ENCODE measurements at regions of chr11 and their contacts with region 1.

Region 1: DNA sequence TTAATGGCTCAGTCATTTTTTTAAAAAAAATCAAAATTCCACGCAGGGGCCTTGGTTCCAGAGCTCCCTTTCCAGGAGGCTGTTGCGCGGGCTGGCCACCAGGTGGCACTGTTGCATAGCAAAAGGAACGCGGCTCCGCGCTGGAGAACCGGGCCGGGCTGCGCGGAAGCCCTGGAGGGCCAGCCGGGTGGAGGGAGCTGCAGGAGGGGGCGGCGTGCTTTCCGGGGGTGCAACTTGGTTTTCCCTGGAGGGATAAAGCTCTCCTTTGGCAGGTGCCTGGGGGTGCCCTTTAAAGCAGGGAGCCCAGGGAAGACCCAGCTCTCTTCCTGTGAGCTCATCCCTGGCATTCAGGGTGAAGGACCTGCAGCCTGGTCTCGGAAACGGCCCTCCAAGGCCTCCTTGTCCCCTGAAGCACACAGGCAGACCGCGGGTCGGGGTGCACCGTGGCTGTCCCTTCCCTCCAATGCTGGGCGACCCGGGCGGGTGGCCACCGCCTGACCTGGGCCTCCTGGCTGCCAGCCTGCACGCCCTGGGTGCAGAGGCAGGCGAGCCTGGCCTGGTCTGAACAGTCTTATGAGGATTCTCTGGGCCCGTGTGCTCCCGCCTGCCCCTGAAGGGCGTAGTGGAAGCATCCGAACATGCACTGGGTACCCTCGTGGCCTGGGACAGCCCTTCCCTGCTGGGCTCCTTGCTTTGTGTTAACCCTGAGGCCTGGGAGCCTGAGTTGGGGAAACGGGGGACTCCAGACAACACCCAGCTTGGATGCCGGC is 23.4 kb downstream of the KRTAP5-5 start:
- DNase-seq: peak; percentile 88
- ATAC-seq: peak; percentile 82
- H3K4me3 Mint-ChIP-seq: no peak overlapping the region
- H3K27ac Mint-ChIP-seq: no peak overlapping the region
- H3K4me1 Mint-ChIP-seq: no peaks in the 10 kb centered on the region
- H3K27me3 Mint-ChIP-seq: peaks cover 21% of the 10 kb centered on the region
- CTCF ChIP-seq: peak; percentile 99

Region 2: GRCh38 chr11:1546536-1547400 is 106.2 kb before region 1 on chr11:
- CTCF ChIA-PET with region 1: interaction called, 31 read pairs
- POLR2A ChIA-PET with region 1: no interaction called
- DNase-seq: peak; percentile 73
- ATAC-seq: peak; percentile 63
- H3K4me3 Mint-ChIP-seq: peak overlapping the region; percentile 53
- H3K27ac Mint-ChIP-seq: no peak overlapping the region
- H3K4me1 Mint-ChIP-seq: peaks cover 4% of the 10 kb centered on the region; the same call in 1 of the 2 replicates
- H3K27me3 Mint-ChIP-seq: peaks cover 59% of the 10 kb centered on the region
- CTCF ChIP-seq: peak; percentile 76

Region 3: GRCh38 chr11:1628506-1629325 is 24.2 kb before region 1 on chr11:
- CTCF ChIA-PET with region 1: interaction called, 15 read pairs
- POLR2A ChIA-PET with region 1: no interaction called
- DNase-seq: peak; percentile 80
- ATAC-seq: peak; percentile 97
- H3K4me3 Mint-ChIP-seq: no peak overlapping the region
- H3K27ac Mint-ChIP-seq: no peak overlapping the region
- H3K4me1 Mint-ChIP-seq: peaks cover 16% of the 10 kb centered on the region
- H3K27me3 Mint-ChIP-seq: peaks cover 41% of the 10 kb centered on the region
- CTCF ChIP-seq: peak; percentile 91

Region 4: DNA sequence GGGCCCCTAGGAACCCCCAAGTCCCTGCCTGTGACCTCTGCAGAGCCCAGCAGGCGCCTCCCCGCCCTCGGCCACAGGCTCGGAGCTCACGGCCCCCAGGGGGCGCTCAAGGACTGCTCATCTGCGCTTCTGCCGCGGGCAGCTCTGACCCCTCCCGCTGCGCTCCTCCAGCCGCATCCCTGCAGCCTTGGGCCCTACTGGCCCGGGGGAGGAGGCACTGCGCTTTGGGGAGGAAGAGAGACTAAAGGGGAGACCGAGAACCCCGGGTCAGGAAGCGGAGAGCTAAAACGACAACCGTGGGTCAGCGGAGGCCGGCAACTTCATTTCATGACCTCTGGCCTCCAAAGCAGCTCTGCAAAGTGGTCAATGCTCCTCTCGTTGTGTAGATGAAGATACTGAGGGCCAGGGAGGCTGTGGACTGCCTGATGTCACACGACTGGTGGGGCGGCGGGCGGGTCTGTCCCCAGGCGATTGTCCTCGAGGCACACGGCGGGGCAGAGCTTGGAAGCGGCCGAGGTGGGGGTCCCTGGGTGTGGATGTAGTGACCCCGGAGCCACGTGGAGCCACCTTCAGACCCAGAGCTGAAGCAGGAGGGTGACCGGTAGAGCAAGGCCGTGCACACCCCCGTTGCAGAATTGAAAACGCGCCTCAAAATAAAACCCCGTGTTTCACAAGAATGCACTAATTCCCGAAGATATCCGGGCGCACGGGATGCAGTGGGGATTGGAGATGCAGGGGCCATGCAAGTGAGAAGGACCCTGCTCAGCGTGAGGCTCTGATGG is 41.3 kb after region 1 on chr11:
- CTCF ChIA-PET with region 1: interaction called, 121 read pairs
- POLR2A ChIA-PET with region 1: no interaction called
- DNase-seq: peak; percentile 92
- ATAC-seq: peak; percentile 86
- H3K4me3 Mint-ChIP-seq: peak overlapping the region; percentile 35; the same call in 1 of the 2 replicates
- H3K27ac Mint-ChIP-seq: no peak overlapping the region
- H3K4me1 Mint-ChIP-seq: peaks cover 3% of the 10 kb centered on the region
- H3K27me3 Mint-ChIP-seq: peaks cover 22% of the 10 kb centered on the region
- CTCF ChIP-seq: peak; percentile 93

Region 5: DNA sequence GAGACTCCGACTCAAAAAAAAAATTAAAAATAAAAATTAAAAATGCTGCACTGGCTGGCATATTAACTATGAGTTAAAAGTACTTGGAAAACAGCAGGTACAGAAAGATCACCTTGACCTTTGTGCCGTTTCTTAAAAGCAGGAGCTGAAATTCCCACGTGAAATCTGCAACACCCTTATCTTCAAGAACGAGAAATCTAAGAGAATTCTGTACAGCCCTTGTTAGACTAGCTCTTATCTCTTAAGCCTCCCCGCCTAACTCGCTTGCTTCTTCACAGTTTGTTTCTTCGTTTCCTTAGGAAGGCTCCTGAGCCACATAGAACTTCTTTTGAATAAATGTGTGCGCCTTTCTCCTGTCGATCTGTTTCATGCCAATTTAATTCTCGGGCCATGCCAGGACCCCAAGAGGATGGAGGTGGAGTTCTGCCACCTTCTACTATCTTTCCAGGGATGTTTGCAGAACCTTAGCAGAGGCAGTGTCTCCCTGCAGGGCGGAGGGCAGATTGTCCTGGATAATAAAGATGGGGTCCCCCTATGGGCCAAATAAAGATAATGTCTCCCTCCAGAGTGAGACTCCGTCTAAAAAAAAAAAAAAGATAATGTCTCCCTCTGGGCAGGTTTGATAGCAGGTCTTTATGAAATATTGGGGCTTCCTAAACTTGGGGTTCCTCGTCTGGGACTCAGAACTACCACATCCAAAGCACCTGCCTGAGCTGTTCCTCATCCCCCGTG is 154.5 kb after region 1 on chr11:
- CTCF ChIA-PET with region 1: interaction called, 15 read pairs
- POLR2A ChIA-PET with region 1: no interaction called
- DNase-seq: no peak
- ATAC-seq: peak; percentile 80
- H3K4me3 Mint-ChIP-seq: no peak overlapping the region
- H3K27ac Mint-ChIP-seq: no peak overlapping the region
- H3K4me1 Mint-ChIP-seq: peaks cover 8% of the 10 kb centered on the region
- H3K27me3 Mint-ChIP-seq: peaks cover 24% of the 10 kb centered on the region
- CTCF ChIP-seq: no peak; the same call in 1 of the 2 replicates

Region 6: DNA sequence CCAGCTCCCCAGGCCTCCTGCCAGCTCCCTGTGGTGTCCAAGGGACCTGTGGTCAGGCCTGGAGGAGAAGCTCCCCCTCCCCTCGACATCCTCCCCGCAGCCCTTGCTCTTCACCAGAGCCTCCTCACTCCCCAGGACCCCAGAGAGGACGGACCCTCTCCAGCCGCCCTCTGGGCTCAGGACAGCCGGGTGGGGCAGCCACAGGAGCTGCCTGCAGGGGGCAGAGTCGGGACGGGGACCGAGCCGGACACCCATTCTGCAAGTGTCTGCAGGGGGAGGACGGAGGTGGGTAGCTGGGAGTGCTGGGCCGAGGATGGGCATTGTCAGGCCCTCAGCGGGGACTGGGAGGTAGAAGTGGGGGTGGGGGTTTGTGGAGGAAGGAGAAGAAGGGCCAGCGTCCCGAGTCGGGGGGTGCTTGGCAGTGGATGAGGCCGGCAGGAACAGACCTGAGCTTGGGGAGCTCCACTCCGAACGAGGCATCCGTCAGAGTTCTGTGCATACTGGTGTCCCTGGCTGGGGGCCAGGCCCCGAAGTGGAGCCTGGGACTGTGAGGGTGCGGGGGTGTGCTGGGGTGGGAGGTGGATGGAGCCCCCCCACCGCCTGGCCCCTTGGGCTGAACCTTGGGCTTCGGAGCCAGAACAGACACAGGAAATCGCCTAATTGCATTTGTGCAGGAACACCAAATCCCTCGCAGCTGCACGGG is 223.6 kb after region 1 on chr11:
- CTCF ChIA-PET with region 1: interaction called, 15 read pairs
- POLR2A ChIA-PET with region 1: no interaction called
- DNase-seq: peak; percentile 77
- ATAC-seq: peak; percentile 85
- H3K4me3 Mint-ChIP-seq: no peak overlapping the region
- H3K27ac Mint-ChIP-seq: no peak overlapping the region
- H3K4me1 Mint-ChIP-seq: 0 out of 2 replicates have a peak, but pooled peaks cover 3% of the 10 kb centered on the region
- H3K27me3 Mint-ChIP-seq: no peaks in the 10 kb centered on the region; the same call in 1 of the 2 replicates
- CTCF ChIP-seq: peak; percentile 21; the same call in 1 of the 2 replicates

Region 7: GRCh38 chr11:2002807-2003206 is 349.9 kb after region 1 on chr11:
- CTCF ChIA-PET with region 1: interaction called, 52 read pairs
- POLR2A ChIA-PET with region 1: interaction called, 3 read pairs
- DNase-seq: no peak
- ATAC-seq: no peak
- H3K4me3 Mint-ChIP-seq: no peak overlapping the region
- H3K27ac Mint-ChIP-seq: no peak overlapping the region
- H3K4me1 Mint-ChIP-seq: no peaks in the 10 kb centered on the region
- H3K27me3 Mint-ChIP-seq: no peaks in the 10 kb centered on the region
- CTCF ChIP-seq: no peak

Measured in WTC11 (cell line).